Activated naive CD4-positive, alpha-beta T cell treated with anti-CD3 and anti-CD28 coated beads for 36 hours (primary cell): ENCODE measurements at regions of chr2 and their contacts with region 1.

Region 1: GRCh38 chr2:204024503-204024902 is 87.9 kb downstream of the ICOS start:
- DNase-seq: peak; percentile 71
- H3K4me3 Mint-ChIP-seq: no peak overlapping the region
- H3K27ac Mint-ChIP-seq: no peak overlapping the region
- H3K4me1 Mint-ChIP-seq: peaks cover 51% of the 10 kb centered on the region
- H3K27me3 Mint-ChIP-seq: no peaks in the 10 kb centered on the region

Region 2: DNA sequence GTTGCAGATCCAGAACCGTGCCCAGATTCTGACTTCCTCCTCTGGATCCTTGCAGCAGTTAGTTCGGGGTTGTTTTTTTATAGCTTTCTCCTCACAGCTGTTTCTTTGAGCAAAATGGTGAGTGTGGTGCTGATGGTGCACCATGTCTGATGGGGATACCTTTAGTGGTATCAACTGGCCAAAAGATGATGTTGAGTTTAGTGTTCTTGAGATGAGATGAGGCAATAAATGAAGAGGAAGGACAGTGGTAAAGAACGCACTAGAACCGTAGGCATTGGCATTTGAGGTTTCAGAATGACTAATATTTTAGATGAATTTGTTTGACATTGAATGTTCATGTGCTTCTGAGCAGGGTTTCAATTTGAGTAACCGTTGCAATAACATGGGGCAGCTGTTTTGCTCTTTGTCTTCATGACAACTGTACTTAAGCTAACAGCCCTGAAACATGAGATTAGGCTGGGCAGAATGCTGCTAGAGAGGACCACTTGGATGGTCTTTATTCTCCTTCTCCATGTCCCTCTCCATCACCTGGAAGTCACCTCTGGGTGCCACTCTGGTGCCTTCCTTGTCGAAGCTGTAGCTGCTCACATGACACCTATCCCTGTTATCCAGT is 153.0 kb before region 1 on chr2:
- CTCF ChIA-PET with region 1: no interaction called
- intact Hi-C with region 1: loop called (anchors 1 kb)
- DNase-seq: peak; percentile 69
- H3K4me3 Mint-ChIP-seq: peak overlapping the region; percentile 92
- H3K27ac Mint-ChIP-seq: peak overlapping the region; percentile 99
- H3K4me1 Mint-ChIP-seq: peaks cover 55% of the 10 kb centered on the region
- H3K27me3 Mint-ChIP-seq: no peaks in the 10 kb centered on the region

Region 3: DNA sequence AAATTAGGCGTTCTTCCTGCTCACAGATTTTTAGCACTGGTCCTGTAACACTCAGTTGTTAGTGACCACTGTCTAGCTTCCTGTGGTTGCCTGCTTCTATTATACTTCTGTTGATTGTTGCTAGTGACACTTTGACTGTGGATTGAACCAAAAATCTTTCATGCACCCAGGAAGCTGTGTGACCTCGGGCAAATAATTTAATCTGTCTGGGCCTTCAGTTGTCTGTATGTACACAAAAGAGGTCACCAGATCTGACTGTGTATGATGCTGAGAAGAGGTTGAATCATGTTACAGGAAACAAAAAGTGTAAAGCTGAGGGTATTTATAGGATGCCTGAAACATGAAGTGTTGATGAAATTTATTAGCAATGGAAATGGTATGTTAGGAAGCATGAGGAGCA is 75.3 kb before region 1 on chr2:
- CTCF ChIA-PET with region 1: no interaction called
- intact Hi-C with region 1: loop called (anchors 1 kb)
- DNase-seq: no peak
- H3K4me3 Mint-ChIP-seq: peak overlapping the region; percentile 42
- H3K27ac Mint-ChIP-seq: peak overlapping the region; percentile 70
- H3K4me1 Mint-ChIP-seq: peaks cover 87% of the 10 kb centered on the region
- H3K27me3 Mint-ChIP-seq: no peaks in the 10 kb centered on the region

Region 4: GRCh38 chr2:203997980-203998809 is 26.3 kb before region 1 on chr2:
- CTCF ChIA-PET with region 1: interaction called, 9 read pairs
- intact Hi-C with region 1: loop called (anchors 1 kb)
- DNase-seq: no peak
- H3K4me3 Mint-ChIP-seq: peak overlapping the region; percentile 4
- H3K27ac Mint-ChIP-seq: peak overlapping the region; percentile 77
- H3K4me1 Mint-ChIP-seq: peaks cover 68% of the 10 kb centered on the region
- H3K27me3 Mint-ChIP-seq: no peaks in the 10 kb centered on the region

Region 5: DNA sequence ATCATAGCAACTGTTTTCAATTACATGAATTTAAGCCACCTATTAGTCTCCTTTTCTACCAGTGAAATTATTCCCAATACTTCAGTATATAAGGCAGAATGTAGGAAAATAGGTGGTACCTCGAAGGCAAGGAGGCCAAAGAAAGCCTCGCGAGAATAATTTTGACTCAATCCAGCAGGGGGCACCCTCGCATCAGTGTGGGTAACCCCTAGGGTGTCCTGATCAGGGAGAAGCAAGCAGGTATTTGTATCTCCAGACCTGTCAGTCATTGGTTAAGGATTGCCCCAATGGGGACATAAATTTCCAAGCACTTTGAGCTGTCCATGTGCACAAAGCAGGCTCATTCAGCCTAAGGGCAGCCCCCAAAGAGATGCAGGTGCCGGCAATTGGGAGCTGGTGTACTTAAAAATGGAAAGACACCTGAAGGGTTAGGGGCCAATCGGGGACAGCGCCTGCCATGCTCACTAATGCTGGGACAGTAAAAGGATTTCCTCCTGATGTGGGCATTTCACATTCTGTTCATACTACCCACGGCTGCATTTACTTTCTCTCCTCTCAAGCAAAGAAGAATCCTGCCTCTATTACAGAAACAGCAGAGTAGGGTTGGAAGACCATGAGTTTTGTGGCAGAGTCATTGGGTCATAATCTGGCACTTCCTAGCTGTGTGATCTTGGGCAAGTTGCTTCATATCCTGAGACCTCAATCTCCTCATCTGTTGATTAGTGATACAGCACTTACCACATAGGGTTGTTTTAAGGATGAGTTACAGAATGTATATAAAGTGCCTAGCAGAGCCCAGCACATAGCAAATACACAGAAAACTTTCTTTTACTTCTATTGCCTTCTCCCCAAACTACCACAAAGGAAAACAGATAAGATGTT is 48.2 kb after region 1 on chr2:
- CTCF ChIA-PET with region 1: interaction called, 41 read pairs
- intact Hi-C with region 1: loop called (anchors 1 kb)
- DNase-seq: peak; percentile 92
- H3K4me3 Mint-ChIP-seq: no peak overlapping the region
- H3K27ac Mint-ChIP-seq: no peak overlapping the region
- H3K4me1 Mint-ChIP-seq: peaks cover 10% of the 10 kb centered on the region
- H3K27me3 Mint-ChIP-seq: peaks cover 2% of the 10 kb centered on the region

Region 6: DNA sequence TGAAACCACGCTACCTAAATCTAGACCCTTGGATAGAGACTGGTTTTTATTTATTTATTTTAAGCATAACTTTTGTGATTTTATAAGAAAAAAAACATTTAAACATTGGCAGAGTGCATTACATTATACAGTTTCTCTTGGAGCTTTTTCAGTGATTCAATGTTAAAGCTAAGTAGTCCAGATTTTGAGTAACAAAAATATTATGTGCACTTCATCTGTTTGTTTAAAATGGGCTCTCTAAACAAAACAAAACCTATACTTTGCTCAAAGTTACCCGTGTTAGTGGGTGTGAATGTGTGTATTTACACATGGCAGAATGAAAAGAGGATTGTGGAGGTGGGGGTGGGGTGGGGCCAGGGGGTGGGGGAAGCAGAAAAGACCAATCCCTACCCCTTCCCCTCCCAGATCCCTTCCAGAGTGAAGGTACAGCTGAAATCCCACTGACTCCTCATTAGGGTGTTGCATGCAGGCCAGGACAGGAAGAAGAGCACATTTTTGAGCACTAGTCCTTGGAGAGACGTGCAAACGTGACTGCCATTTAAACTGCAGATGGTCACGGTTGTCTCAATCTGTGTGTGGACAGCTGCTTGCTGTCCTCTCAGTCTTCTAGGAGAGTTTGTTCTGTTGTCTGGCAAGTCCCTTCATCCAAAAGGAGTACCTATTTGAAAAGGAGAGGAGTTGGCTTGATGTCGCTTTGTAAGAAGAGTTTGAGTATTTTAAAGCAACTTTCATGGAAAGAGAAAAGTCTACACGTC is 215.1 kb after region 1 on chr2:
- CTCF ChIA-PET with region 1: interaction called, 4 read pairs
- intact Hi-C with region 1: loop called (anchors 5 kb)
- DNase-seq: no peak
- H3K4me3 Mint-ChIP-seq: no peak overlapping the region
- H3K27ac Mint-ChIP-seq: no peak overlapping the region
- H3K4me1 Mint-ChIP-seq: peaks cover 14% of the 10 kb centered on the region
- H3K27me3 Mint-ChIP-seq: no peaks in the 10 kb centered on the region

Region 7: DNA sequence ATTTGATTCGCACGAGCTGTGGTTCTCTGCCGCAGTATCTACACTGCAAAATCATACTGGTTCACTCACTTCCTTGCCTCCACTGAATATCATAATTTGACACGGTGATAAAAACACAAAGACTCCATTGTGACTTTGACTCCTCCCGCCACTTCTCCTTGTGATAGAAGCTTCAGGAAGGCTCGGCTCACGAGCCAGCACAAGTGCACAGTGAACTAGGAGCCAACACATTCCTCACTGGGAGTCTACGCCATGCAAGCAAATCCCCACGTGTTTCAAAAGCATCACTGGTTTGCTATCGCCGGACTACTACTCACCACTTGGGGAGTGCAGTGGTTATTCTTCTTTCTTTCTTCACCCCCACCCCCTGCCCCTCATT is 227.5 kb after region 1 on chr2:
- CTCF ChIA-PET with region 1: no interaction called
- intact Hi-C with region 1: no loop called
- DNase-seq: no peak
- H3K4me3 Mint-ChIP-seq: no peak overlapping the region
- H3K27ac Mint-ChIP-seq: no peak overlapping the region
- H3K4me1 Mint-ChIP-seq: peaks cover 1% of the 10 kb centered on the region
- H3K27me3 Mint-ChIP-seq: peaks cover 3% of the 10 kb centered on the region

Region 8: DNA sequence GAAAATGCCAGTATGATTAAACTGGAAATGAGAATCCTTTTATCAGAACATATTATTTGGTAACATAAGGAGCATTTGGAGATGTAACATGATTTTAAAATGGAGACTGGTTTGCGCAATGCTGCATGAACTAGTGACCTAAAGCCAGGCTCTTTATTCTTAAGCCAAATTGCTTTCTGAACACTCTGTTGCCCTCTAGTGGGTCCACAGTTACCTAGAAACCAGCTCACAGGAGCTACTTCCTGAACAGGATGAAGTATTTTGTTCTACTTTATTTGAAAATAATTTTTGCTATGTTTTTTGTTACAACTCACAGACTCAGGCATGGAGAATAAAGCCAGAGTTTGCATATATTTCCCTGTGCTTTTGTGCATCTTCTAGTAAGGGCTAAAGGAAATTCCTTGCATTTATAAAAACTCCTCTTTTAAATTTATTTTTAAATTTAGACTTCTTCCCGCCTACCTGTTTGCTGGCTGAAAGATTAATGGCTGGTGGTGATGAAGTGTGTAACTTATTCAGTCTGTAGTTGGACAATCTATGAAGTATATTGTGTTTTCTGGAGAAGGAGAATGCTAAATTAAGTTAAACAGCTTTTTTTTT is 667.5 kb after region 1 on chr2:
- CTCF ChIA-PET with region 1: no interaction called
- intact Hi-C with region 1: loop called (anchors 1 kb)
- DNase-seq: peak; percentile 63
- H3K4me3 Mint-ChIP-seq: no peak overlapping the region
- H3K27ac Mint-ChIP-seq: no peak overlapping the region
- H3K4me1 Mint-ChIP-seq: peaks cover 7% of the 10 kb centered on the region
- H3K27me3 Mint-ChIP-seq: no peaks in the 10 kb centered on the region